GM12878 (cell line): ENCODE measurements at regions of chr4 and their contacts with region 1.

Region 1: GRCh38 chr4:176492646-176493302 is 173.0 kb downstream of the SPCS3 start:
- DNase-seq: peak; percentile 77
- ATAC-seq: peak; percentile 100
- H3K4me3 ChIP-seq: no peak overlapping the region
- H3K27ac ChIP-seq: peak overlapping the region; percentile 73
- H3K4me1 ChIP-seq: no peaks in the 10 kb centered on the region
- H3K27me3 ChIP-seq: no peaks in the 10 kb centered on the region
- CTCF ChIP-seq: no peak
- EP300 ChIP-seq: peak; percentile 54 to 70; a peak in 3 of 4 replicates
- POLR2A ChIP-seq: no peak
- RAD21 ChIP-seq: no peak

Region 2: GRCh38 chr4:176413171-176413570 is 79.6 kb before region 1 on chr4:
- CTCF ChIA-PET with region 1: no interaction called
- POLR2A ChIA-PET with region 1: no interaction called
- RAD21 ChIA-PET with region 1: interaction called, 5 read pairs
- SMC1A ChIA-PET with region 1: interaction called, 20 read pairs
- in situ Hi-C with region 1: no loop called
- intact Hi-C with region 1: no loop called
- DNase-seq: peak; percentile 88
- ATAC-seq: peak; percentile 65
- H3K4me3 ChIP-seq: no peak overlapping the region
- H3K27ac ChIP-seq: peak overlapping the region; percentile 78
- H3K4me1 ChIP-seq: peaks cover 15% of the 10 kb centered on the region
- H3K27me3 ChIP-seq: no peaks in the 10 kb centered on the region
- CTCF ChIP-seq: no peak
- EP300 ChIP-seq: no peak
- POLR2A ChIP-seq: no peak
- RAD21 ChIP-seq: 0 out of 2 replicates have a peak, but pooled peaks have one; percentile 16

Region 3: GRCh38 chr4:176464748-176465147 is 28.0 kb before region 1 on chr4:
- CTCF ChIA-PET with region 1: interaction called, 3 read pairs
- POLR2A ChIA-PET with region 1: interaction called, 4 read pairs
- RAD21 ChIA-PET with region 1: no interaction called
- SMC1A ChIA-PET with region 1: interaction called, 11 read pairs
- in situ Hi-C with region 1: no loop called
- intact Hi-C with region 1: no loop called
- DNase-seq: peak; percentile 54
- ATAC-seq: peak; percentile 97
- H3K4me3 ChIP-seq: no peak overlapping the region
- H3K27ac ChIP-seq: 0 out of 2 replicates have a peak overlapping the region, but pooled peaks have one; percentile 9
- H3K4me1 ChIP-seq: peaks cover 13% of the 10 kb centered on the region
- H3K27me3 ChIP-seq: no peaks in the 10 kb centered on the region
- CTCF ChIP-seq: no peak
- EP300 ChIP-seq: peak in 1 of 2 experiments; percentile 83; a peak in 2 of 4 replicates
- POLR2A ChIP-seq: no peak
- RAD21 ChIP-seq: no peak

Region 4: GRCh38 chr4:176479767-176480166 is 13.0 kb before region 1 on chr4:
- CTCF ChIA-PET with region 1: interaction called, 4 read pairs
- POLR2A ChIA-PET with region 1: no interaction called
- RAD21 ChIA-PET with region 1: interaction called, 11 read pairs
- SMC1A ChIA-PET with region 1: interaction called, 5 read pairs
- in situ Hi-C with region 1: no loop called
- intact Hi-C with region 1: no loop called
- DNase-seq: no peak
- ATAC-seq: peak; percentile 66
- H3K4me3 ChIP-seq: no peak overlapping the region
- H3K27ac ChIP-seq: no peak overlapping the region
- H3K4me1 ChIP-seq: no peaks in the 10 kb centered on the region
- H3K27me3 ChIP-seq: no peaks in the 10 kb centered on the region
- CTCF ChIP-seq: no peak
- EP300 ChIP-seq: no peak
- POLR2A ChIP-seq: no peak
- RAD21 ChIP-seq: no peak

Region 5: GRCh38 chr4:176539785-176540175 is 47.0 kb after region 1 on chr4:
- CTCF ChIA-PET with region 1: no interaction called
- POLR2A ChIA-PET with region 1: interaction called, 13 read pairs
- RAD21 ChIA-PET with region 1: no interaction called
- SMC1A ChIA-PET with region 1: no interaction called
- in situ Hi-C with region 1: no loop called
- intact Hi-C with region 1: no loop called
- DNase-seq: no peak
- ATAC-seq: no peak
- H3K4me3 ChIP-seq: no peak overlapping the region
- H3K27ac ChIP-seq: no peak overlapping the region
- H3K4me1 ChIP-seq: no peaks in the 10 kb centered on the region
- H3K27me3 ChIP-seq: no peaks in the 10 kb centered on the region; a peak in 1 of 4 replicates
- CTCF ChIP-seq: no peak
- EP300 ChIP-seq: no peak
- POLR2A ChIP-seq: no peak
- RAD21 ChIP-seq: no peak

Region 6: DNA sequence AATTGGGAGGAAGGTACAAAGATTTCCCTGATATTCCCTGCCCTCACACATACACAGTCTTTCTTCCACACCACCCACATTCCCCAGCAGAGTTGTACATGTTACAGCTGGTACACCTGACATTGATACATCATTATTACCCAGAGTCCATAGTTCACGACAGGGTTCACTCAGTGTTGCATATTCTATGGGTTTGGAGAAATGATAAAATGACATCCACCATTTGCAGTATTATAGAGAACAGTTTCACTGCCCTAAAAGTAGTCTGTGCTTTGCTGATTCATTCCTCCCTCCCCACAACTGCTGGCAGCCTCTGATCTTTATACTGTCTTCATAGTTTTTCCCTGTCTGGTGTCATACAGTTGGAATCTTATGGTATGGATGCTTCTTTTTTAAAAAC is 934.4 kb after region 1 on chr4:
- CTCF ChIA-PET with region 1: no interaction called
- POLR2A ChIA-PET with region 1: no interaction called
- RAD21 ChIA-PET with region 1: no interaction called
- SMC1A ChIA-PET with region 1: no interaction called
- in situ Hi-C with region 1: no loop called
- intact Hi-C with region 1: no loop called
- DNase-seq: no peak
- ATAC-seq: no peak
- H3K4me3 ChIP-seq: no peak overlapping the region
- H3K27ac ChIP-seq: no peak overlapping the region
- H3K4me1 ChIP-seq: no peaks in the 10 kb centered on the region
- H3K27me3 ChIP-seq: no peaks in the 10 kb centered on the region
- CTCF ChIP-seq: no peak
- EP300 ChIP-seq: no peak
- POLR2A ChIP-seq: no peak
- RAD21 ChIP-seq: no peak